H1 (cell line): ENCODE measurements at regions of chr11 and their contacts with region 1.

Region 1: DNA sequence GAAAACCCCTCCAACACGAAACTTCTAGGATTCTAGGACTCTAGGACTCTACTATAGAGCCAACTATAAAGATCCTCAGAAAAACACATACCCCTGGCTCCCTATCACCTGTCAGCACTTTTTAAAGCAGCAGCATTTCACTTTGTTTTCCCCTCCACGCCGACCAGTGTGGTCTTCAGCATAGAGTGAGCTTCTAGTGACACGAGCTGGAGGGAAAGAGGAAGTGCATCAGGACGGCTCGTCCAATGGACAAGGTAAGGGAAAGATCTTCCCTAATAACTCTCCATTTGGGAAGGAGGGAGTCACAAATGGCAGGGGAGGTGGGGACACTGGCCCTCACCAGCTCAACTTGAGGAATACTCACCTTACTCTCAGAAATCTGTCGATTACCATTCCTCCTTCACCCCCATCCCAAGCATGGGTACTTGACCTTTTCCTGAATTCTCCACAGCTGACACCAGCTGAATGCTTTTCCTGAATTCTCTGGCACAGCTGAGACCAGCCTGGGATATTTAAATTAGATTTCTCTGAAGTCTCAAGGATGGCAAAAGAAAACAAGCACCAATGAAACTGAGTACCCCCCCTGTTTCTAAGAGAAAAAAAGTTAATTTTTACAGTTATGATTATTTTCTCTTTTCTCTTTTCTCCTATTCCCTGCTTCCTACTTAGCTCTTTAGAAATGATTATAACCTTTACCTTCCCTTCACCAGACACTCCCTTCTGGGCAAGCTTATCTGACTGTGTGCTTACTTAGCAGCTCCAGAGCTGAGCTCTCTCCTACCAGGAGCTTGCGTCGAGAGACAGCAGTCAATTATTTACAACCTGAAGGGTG is 33.3 kb upstream of the NNMT start:
- DNase-seq: no peak
- H3K4me3 ChIP-seq: no peak overlapping the region
- H3K27ac ChIP-seq: no peak overlapping the region
- H3K4me1 ChIP-seq: no peaks in the 10 kb centered on the region; a peak in 3 of 7 replicates
- H3K27me3 ChIP-seq: no peaks in the 10 kb centered on the region
- CTCF ChIP-seq: peak; percentile 62 to 80 (median 64)
- EP300 ChIP-seq: no peak
- POLR2A ChIP-seq: no peak
- RAD21 ChIP-seq: peak; percentile 88 to 91

Region 2: GRCh38 chr11:113884361-113884836 is 378.5 kb before region 1 on chr11:
- CTCF ChIA-PET with region 1: interaction called, 132 read pairs
- POLR2A ChIA-PET with region 1: no interaction called
- DNase-seq: peak in 1 of 2 experiments; percentile 62
- H3K4me3 ChIP-seq: no peak overlapping the region
- H3K27ac ChIP-seq: no peak overlapping the region
- H3K4me1 ChIP-seq: peaks cover 0 to 8% (median 0%) of the 10 kb centered on the region in 4 experiments; a peak in 2 of 7 replicates
- H3K27me3 ChIP-seq: no peaks in the 10 kb centered on the region
- CTCF ChIP-seq: no peak
- EP300 ChIP-seq: no peak; a peak in 1 of 3 replicates
- POLR2A ChIP-seq: no peak
- RAD21 ChIP-seq: no peak

Region 3: GRCh38 chr11:113974741-113975470 is 288.0 kb before region 1 on chr11 and contains the start of gene HTR3A:
- CTCF ChIA-PET with region 1: interaction called, 19 read pairs
- POLR2A ChIA-PET with region 1: no interaction called
- DNase-seq: peak; percentile 43 to 76
- H3K4me3 ChIP-seq: peak within 1 kb of the TSS in 1 of 4 experiments; percentile 26; a peak in 3 of 8 replicates
- H3K27ac ChIP-seq: no peak within 1 kb of the TSS
- H3K4me1 ChIP-seq: peaks cover 0 to 14% (median 13%) of the 10 kb centered on the region in 4 experiments; a peak in 6 of 7 replicates
- H3K27me3 ChIP-seq: peaks cover 0 to 3% (median 0%) of the 10 kb centered on the region in 4 experiments; a peak in 1 of 7 replicates
- CTCF ChIP-seq: peak in 1 of 3 experiments; percentile 32; a peak in 1 of 4 replicates
- EP300 ChIP-seq: no peak
- POLR2A ChIP-seq: no peak
- RAD21 ChIP-seq: no peak; a peak in 1 of 4 replicates
- total RNA-seq, gene HTR3A: 6.5 and 7.5 TPM in 2 replicates

Region 4: DNA sequence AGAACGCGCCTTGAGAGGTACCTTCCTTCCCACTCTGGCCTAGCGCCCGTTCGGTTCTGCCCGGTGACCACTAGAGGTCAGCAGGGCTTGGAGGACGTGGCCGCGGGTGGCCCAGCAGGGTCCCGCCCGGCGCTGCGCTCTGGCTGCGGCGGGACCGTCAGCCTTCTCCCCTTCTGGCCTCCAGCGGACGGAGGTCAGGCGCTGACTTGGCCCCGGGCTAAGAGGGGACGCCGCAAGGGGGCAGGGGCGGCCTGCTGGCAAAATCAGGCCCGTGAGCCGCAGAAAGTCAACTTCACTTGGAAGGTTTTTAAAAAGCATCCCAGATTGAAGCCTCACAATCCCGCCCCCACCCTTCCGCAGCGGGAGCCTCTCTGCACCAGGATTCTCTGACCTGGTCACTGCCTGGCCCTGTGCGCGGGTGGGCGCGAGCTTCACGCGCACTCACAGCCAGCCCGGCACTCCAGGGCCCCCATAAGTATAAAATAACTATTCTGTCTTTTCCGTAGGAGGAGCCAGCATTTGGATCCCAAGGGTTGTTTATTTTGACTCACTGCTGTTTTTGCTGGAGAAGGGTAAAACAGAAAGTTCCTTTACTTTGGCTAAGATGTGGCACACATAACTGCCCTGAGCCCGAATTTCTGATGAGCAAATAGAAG is 226.6 kb before region 1 on chr11:
- CTCF ChIA-PET with region 1: interaction called, 183 read pairs
- POLR2A ChIA-PET with region 1: no interaction called
- DNase-seq: peak; percentile 86 to 90
- H3K4me3 ChIP-seq: peak overlapping the region in 1 of 4 experiments; percentile 43; a peak in 2 of 8 replicates
- H3K27ac ChIP-seq: no peak overlapping the region
- H3K4me1 ChIP-seq: no peaks in the 10 kb centered on the region
- H3K27me3 ChIP-seq: peaks cover 0 to 3% (median 0%) of the 10 kb centered on the region in 4 experiments; a peak in 2 of 7 replicates
- CTCF ChIP-seq: peak; percentile 70 to 98 (median 96)
- EP300 ChIP-seq: 0 out of 3 replicates have a peak, but pooled peaks of 1 of the 2 experiments have one; percentile 56
- POLR2A ChIP-seq: no peak
- RAD21 ChIP-seq: peak; percentile 81 to 87

Region 5: DNA sequence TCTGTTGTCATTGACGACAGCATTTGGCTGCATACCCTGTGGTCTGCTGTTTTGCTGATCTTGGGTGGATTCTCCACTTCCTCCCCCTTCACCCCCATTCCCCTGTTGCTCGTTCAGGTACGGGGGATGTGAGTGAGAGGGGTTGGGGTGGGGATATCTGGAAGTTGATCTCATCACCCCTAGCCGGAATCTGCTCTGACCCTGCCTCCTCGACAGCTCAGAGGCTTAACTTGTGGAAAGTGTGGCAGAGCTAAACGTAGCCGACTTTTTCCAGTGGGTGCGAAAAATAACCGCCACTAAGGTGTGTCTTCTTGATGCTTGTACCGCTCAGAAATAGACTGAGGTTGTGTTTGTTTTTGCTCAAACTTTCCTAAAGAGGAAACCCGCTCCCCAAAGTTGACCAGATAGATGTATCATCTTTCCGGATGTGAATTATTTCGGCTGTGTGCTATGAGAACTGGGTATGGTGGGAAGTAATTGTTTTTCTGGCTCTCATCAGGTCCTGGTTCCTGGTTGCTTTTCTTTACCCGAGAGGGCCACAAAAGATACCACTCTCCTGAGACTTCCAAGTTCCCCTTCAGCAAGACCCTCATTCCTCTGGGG is 196.8 kb before region 1 on chr11:
- CTCF ChIA-PET with region 1: interaction called, 17 read pairs
- POLR2A ChIA-PET with region 1: no interaction called
- DNase-seq: no peak
- H3K4me3 ChIP-seq: no peak overlapping the region
- H3K27ac ChIP-seq: no peak overlapping the region
- H3K4me1 ChIP-seq: peaks cover 0 to 6% (median 4%) of the 10 kb centered on the region in 4 experiments; a peak in 3 of 7 replicates
- H3K27me3 ChIP-seq: peaks cover 19 to 40% (median 37%) of the 10 kb centered on the region in 4 experiments
- CTCF ChIP-seq: no peak
- EP300 ChIP-seq: no peak
- POLR2A ChIP-seq: no peak
- RAD21 ChIP-seq: no peak

Region 6: GRCh38 chr11:114195981-114196731 is 66.7 kb before region 1 on chr11:
- CTCF ChIA-PET with region 1: interaction called, 52 read pairs
- POLR2A ChIA-PET with region 1: no interaction called
- DNase-seq: no peak
- H3K4me3 ChIP-seq: no peak overlapping the region
- H3K27ac ChIP-seq: no peak overlapping the region
- H3K4me1 ChIP-seq: peaks cover 0 to 5% (median 0%) of the 10 kb centered on the region in 4 experiments; a peak in 2 of 7 replicates
- H3K27me3 ChIP-seq: no peaks in the 10 kb centered on the region
- CTCF ChIP-seq: no peak
- EP300 ChIP-seq: no peak
- POLR2A ChIP-seq: no peak
- RAD21 ChIP-seq: peak in 1 of 2 experiments; percentile 28; a peak in 1 of 4 replicates

Region 7: GRCh38 chr11:114243461-114244372 is 19.2 kb before region 1 on chr11:
- CTCF ChIA-PET with region 1: interaction called, 256 read pairs
- POLR2A ChIA-PET with region 1: no interaction called
- DNase-seq: no peak
- H3K4me3 ChIP-seq: no peak overlapping the region
- H3K27ac ChIP-seq: no peak overlapping the region
- H3K4me1 ChIP-seq: peaks cover 0 to 2% (median 0%) of the 10 kb centered on the region in 4 experiments; a peak in 2 of 7 replicates
- H3K27me3 ChIP-seq: no peaks in the 10 kb centered on the region
- CTCF ChIP-seq: no peak
- EP300 ChIP-seq: no peak
- POLR2A ChIP-seq: no peak
- RAD21 ChIP-seq: no peak

Region 8: GRCh38 chr11:114449845-114450244 is 186.9 kb after region 1 on chr11:
- CTCF ChIA-PET with region 1: no interaction called
- POLR2A ChIA-PET with region 1: no interaction called
- DNase-seq: no peak
- H3K4me3 ChIP-seq: no peak overlapping the region
- H3K27ac ChIP-seq: no peak overlapping the region
- H3K4me1 ChIP-seq: no peaks in the 10 kb centered on the region
- H3K27me3 ChIP-seq: no peaks in the 10 kb centered on the region
- CTCF ChIP-seq: no peak
- EP300 ChIP-seq: no peak
- POLR2A ChIP-seq: no peak
- RAD21 ChIP-seq: no peak